ENCODE measurements at regions of chr1 and their contacts with region 1.

Region 1: DNA sequence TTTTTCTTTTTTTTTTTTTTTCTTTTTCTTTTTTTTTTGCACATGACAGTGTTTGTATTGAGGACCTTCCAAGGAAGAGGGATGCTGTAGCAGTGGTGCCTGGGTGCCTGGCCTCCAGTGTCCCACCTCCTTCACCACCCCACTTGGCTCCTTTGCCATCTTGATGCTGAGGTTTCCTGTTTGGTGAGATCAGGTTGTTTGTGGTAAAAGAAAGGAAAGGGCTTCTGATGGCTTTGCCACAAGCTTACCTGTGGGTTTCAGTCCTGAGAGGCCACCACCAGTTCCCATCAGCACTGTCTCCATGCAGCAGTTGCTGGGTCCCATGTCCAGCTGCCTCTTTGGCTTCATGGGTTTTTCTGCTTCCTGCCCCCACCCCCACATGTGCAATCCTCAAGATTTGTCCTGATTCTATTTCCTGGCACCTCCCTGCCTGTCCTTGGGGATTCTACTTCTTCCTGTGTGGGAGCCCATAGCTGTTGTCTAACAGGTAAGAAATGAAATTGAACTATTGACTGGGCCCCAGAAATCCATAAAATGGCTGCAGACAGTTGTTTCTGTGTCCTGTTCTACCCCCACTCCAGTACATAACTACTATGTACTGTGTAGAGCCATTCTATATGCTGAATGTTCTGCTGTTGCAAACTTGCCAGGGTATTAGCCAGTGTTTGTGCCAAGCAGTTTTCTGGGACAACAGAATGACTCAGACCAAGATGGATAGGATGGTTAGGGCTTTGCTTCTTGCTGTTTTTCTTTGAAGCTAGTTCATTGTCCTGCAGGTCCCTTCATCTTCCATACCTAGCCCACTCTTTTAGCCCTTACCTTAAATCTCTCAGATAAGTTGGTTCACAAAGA is 4.2 kb upstream of the CCDC28B start:
- DNase-seq: peak in 1 of 35 experiments; percentile 50
- ATAC-seq: peak in 1 of 4 experiments; percentile 16
- H3K4me3 ChIP-seq: no peak overlapping the region
- H3K4me3 Mint-ChIP-seq: peak overlapping the region in 1 of 3 donors; percentile 64
- H3K27ac ChIP-seq: no peak overlapping the region
- H3K27ac Mint-ChIP-seq: peak overlapping the region; percentile 76 to 82
- H3K4me1 ChIP-seq: peaks cover 21 to 53% of the 10 kb centered on the region in 2 experiments
- H3K4me1 Mint-ChIP-seq: peaks cover 50 to 58% (median 55%) of the 10 kb centered on the region in 3 donors
- H3K27me3 ChIP-seq: no peaks in the 10 kb centered on the region
- H3K27me3 Mint-ChIP-seq: no peaks in the 10 kb centered on the region

Region 2: GRCh38 chr1:32128964-32129363 is 67.2 kb before region 1 on chr1:
- CTCF ChIA-PET with region 1: interaction called in 1 of 2 experiments, 3 read pairs
- POLR2A ChIA-PET with region 1: interaction called in 1 of 2 experiments, 20 read pairs
- DNase-seq: no peak
- ATAC-seq: no peak
- H3K4me3 ChIP-seq: no peak overlapping the region
- H3K4me3 Mint-ChIP-seq: no peak overlapping the region
- H3K27ac ChIP-seq: no peak overlapping the region
- H3K27ac Mint-ChIP-seq: no peak overlapping the region
- H3K4me1 ChIP-seq: peaks cover 5 to 9% of the 10 kb centered on the region in 2 experiments
- H3K4me1 Mint-ChIP-seq: peaks cover 38 to 46% (median 44%) of the 10 kb centered on the region in 3 donors
- H3K27me3 ChIP-seq: no peaks in the 10 kb centered on the region
- H3K27me3 Mint-ChIP-seq: no peaks in the 10 kb centered on the region

Region 3: DNA sequence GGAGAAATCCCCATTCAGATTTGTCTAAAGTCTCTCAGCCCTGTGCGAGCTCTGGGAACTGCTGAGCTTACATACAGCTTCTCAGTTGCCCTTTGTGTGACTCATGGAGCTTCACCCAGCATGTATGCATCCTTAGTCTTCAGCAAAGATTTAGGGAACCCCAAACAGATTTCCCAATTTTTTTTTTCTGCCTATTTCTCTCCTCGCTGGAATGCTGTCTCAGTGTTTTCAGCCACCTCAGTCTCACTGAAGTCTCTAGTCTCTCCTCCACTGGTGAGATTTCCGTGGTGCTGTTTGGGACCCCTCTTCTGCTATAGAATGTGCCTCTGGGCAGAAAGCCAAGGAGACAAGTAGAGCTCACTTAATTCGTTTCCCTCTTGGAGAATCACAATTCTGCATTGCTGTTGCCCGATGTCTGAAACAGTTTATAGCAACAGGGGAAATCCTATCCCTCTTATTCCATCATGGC is 44.8 kb before region 1 on chr1:
- CTCF ChIA-PET with region 1: interaction called in 1 of 2 experiments, 10 read pairs
- POLR2A ChIA-PET with region 1: interaction called in 1 of 2 experiments, 6 read pairs
- DNase-seq: no peak
- ATAC-seq: no peak
- H3K4me3 ChIP-seq: no peak overlapping the region
- H3K4me3 Mint-ChIP-seq: no peak overlapping the region
- H3K27ac ChIP-seq: no peak overlapping the region
- H3K27ac Mint-ChIP-seq: no peak overlapping the region
- H3K4me1 ChIP-seq: no peaks in the 10 kb centered on the region
- H3K4me1 Mint-ChIP-seq: peaks cover 18 to 28% (median 20%) of the 10 kb centered on the region in 3 donors
- H3K27me3 ChIP-seq: no peaks in the 10 kb centered on the region
- H3K27me3 Mint-ChIP-seq: no peaks in the 10 kb centered on the region

Measured in T-cell (primary cell).